PC-3 (cell line): ENCODE measurements at regions of chr4 and their contacts with region 1.

Region 1: GRCh38 chr4:144583658-144584057 is 62.3 kb upstream of the HHIP start:
- DNase-seq: peak; percentile 68
- ATAC-seq: no peak
- H3K4me3 ChIP-seq: no peak overlapping the region
- H3K27ac ChIP-seq: peak overlapping the region; percentile 93
- H3K4me1 ChIP-seq: peaks cover 59% of the 10 kb centered on the region
- H3K27me3 ChIP-seq: no peaks in the 10 kb centered on the region
- CTCF ChIP-seq: no peak

Region 2: DNA sequence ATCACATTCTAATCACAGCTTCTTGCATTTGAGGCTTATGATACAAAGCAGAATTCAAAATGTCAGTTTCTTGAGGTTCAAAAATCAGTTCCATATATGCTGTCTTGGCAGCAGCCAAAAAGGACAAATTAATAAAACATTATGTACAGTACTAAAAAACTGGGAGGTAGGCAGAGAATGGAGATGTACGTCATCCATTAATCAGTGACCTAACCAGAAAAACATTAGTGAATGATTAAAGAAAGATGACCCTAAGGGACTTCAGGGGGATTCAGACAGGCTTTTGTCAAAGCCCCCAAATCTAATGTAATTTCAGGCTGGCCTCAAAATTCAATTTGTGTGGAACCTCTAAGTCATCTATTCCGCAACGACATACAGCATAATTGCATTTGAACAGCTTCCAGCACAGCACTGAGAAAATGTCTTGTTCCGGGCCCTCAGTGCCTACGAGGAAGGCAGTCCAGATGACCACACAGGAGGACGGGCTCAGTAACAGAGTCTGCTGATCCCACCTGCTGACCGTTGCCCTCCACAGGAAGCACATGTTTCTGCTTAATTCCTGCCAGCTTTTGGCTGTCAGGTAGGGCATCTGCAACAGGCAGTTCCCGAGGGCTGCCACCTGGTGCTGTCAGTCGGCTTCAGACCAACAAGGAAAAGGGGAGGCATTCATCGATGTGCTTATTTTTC is 21.5 kb before region 1 on chr4:
- CTCF ChIA-PET with region 1: no interaction called
- POLR2A ChIA-PET with region 1: no interaction called
- intact Hi-C with region 1: loop called (anchors 1 kb)
- DNase-seq: no peak
- ATAC-seq: no peak
- H3K4me3 ChIP-seq: no peak overlapping the region
- H3K27ac ChIP-seq: no peak overlapping the region
- H3K4me1 ChIP-seq: peaks cover 9% of the 10 kb centered on the region
- H3K27me3 ChIP-seq: no peaks in the 10 kb centered on the region
- CTCF ChIP-seq: no peak

Region 3: GRCh38 chr4:144627663-144628076 is 44.0 kb after region 1 on chr4:
- CTCF ChIA-PET with region 1: no interaction called
- POLR2A ChIA-PET with region 1: no interaction called
- intact Hi-C with region 1: loop called (anchors 1 kb)
- DNase-seq: peak; percentile 80
- ATAC-seq: peak; percentile 92
- H3K4me3 ChIP-seq: no peak overlapping the region
- H3K27ac ChIP-seq: 0 out of 2 replicates have a peak overlapping the region, but pooled peaks have one; percentile 10
- H3K4me1 ChIP-seq: peaks cover 12% of the 10 kb centered on the region
- H3K27me3 ChIP-seq: no peaks in the 10 kb centered on the region
- CTCF ChIP-seq: no peak

Region 4: DNA sequence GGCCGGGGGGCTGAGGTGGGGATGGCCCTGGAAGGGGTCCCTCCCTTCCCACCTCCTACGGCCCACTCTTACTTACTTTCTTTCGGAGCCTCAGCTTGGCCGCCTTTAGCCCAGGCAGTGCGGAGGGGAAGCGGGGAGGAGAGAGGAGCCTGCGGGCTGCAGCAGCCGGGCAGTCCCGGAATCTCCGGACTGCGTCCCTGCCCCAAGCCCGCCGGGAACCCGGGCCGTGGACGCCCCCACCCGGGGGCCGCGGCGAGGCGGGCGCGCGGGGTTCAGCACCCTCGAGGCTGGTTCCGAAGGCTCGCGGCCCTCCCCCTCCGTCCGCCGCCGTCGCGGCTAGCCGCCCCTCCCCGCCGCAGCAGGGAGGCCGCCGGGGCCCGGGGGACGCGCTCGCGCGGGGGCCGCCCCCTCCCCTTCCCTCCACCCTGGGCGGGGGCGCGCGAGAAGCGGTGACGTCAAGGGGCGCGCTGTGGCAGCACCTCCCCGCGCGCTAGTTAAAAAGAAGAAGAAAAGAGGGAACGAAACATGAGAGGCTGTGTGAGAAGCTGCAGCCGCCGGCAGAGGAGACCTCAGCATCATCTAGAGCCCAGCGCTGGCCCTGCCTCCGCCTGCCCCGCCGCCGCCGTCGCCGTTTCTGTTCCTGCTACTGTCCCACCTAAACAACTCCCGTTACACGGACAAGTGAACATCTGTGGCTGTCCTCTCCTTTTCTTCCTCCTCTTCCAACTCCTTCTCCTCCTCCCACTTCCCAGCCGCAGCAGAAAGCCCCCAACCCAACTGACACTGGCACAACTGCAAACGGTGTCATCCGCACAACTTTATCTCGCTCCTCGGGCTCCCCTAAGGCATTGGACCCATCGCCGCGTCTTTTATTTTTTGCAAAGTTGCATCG is 62.2 kb after region 1 on chr4 and contains the start of gene HHIP:
- CTCF ChIA-PET with region 1: no interaction called
- POLR2A ChIA-PET with region 1: interaction called, 3 read pairs
- intact Hi-C with region 1: loop called (anchors 2 kb)
- DNase-seq: peak; percentile 22
- ATAC-seq: peak; percentile 77
- H3K4me3 ChIP-seq: peak within 1 kb of the TSS; percentile 66
- H3K27ac ChIP-seq: no peak within 1 kb of the TSS
- H3K4me1 ChIP-seq: no peaks in the 10 kb centered on the region
- H3K27me3 ChIP-seq: peaks cover 38% of the 10 kb centered on the region
- CTCF ChIP-seq: no peak
- total RNA-seq, gene HHIP: 1.2 and 2.3 TPM in 2 replicates

Region 5: GRCh38 chr4:144709793-144710525 is 126.3 kb after region 1 on chr4:
- CTCF ChIA-PET with region 1: no interaction called
- POLR2A ChIA-PET with region 1: no interaction called
- intact Hi-C with region 1: loop called (anchors 1 kb)
- DNase-seq: peak; percentile 90
- ATAC-seq: peak; percentile 83
- H3K4me3 ChIP-seq: no peak overlapping the region
- H3K27ac ChIP-seq: peak overlapping the region; percentile 59
- H3K4me1 ChIP-seq: peaks cover 27% of the 10 kb centered on the region
- H3K27me3 ChIP-seq: 0 out of 2 replicates have a peak, but pooled peaks cover 6% of the 10 kb centered on the region
- CTCF ChIP-seq: no peak

Region 6: GRCh38 chr4:144754562-144755410 is 171.1 kb after region 1 on chr4:
- CTCF ChIA-PET with region 1: no interaction called
- POLR2A ChIA-PET with region 1: no interaction called
- intact Hi-C with region 1: loop called (anchors 1 kb)
- DNase-seq: peak; percentile 50
- ATAC-seq: peak; percentile 72
- H3K4me3 ChIP-seq: no peak overlapping the region
- H3K27ac ChIP-seq: no peak overlapping the region
- H3K4me1 ChIP-seq: 0 out of 2 replicates have a peak, but pooled peaks cover 7% of the 10 kb centered on the region
- H3K27me3 ChIP-seq: no peaks in the 10 kb centered on the region
- CTCF ChIP-seq: peak; percentile 83